CD4-positive, alpha-beta T cell (primary cell): ENCODE measurements at regions of chr7 and their contacts with region 1.

Region 1: GRCh38 chr7:129054438-129055293 is at the start of gene TNPO3:
- DNase-seq: peak; percentile 80 to 94 (median 86)
- ATAC-seq: peak; percentile 87
- H3K4me3 ChIP-seq: peak within 1 kb of the TSS; percentile 88
- H3K4me3 Mint-ChIP-seq: peak within 1 kb of the TSS; percentile 99
- H3K27ac ChIP-seq: peak within 1 kb of the TSS; percentile 91 to 98
- H3K27ac Mint-ChIP-seq: peak within 1 kb of the TSS; percentile 96
- H3K4me1 ChIP-seq: peaks cover 25% of the 10 kb centered on the region
- H3K4me1 Mint-ChIP-seq: peaks cover 49% of the 10 kb centered on the region
- H3K27me3 ChIP-seq: peaks cover 0 to 4% of the 10 kb centered on the region in 2 experiments
- H3K27me3 Mint-ChIP-seq: no peaks in the 10 kb centered on the region
- CTCF ChIP-seq: no peak
- total RNA-seq, gene TNPO3: 17.1 to 18.7 TPM

Region 2: DNA sequence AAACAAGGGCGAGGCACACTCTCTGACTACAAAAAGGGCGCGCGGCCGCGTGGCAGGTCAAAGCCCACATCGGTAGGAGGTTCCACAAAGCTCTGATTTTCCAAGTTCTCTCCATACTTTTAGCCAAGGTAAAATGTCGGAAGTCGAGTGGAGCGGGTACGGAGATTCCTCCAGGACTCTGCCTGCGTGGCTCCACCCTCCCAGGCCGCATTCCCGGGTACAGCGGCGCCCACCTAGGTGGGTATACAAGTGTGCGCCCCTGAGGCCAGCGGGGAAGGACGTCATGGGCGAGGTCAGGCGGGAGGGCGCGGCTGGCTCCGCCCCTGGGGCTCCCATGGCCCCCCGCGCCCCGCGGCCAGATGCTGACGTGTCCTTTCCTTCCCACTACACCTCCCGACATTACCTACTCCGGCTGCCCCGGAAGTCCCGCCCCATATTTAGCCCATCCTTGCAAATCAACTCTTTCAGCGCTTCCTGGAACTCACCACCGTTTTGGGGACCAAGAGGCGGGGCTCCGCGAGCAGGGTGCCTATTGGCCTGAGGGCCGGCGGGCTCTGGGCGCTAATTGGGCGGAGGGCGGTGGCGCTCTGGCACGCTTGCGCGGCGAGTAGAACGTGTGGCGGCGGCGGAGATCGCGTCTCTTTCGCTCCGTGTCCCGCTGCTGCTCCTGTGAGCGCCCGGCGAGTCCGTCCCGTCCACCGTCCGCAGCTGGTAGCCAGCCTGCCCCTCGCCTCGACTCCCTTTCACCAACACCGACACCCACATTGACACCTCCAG is 1402.9 kb before region 1 on chr7 and contains the start of gene SND1:
- CTCF ChIA-PET with region 1: no interaction called
- POLR2A ChIA-PET with region 1: no interaction called
- intact Hi-C with region 1: loop called in 1 of 2 experiments (anchors 10 kb)
- DNase-seq: peak; percentile 95 to 100 (median 98)
- ATAC-seq: peak; percentile 93
- H3K4me3 ChIP-seq: peak within 1 kb of the TSS; percentile 99
- H3K4me3 Mint-ChIP-seq: peak within 1 kb of the TSS; percentile 93
- H3K27ac ChIP-seq: peak within 1 kb of the TSS; percentile 89 to 94
- H3K27ac Mint-ChIP-seq: no peak within 1 kb of the TSS
- H3K4me1 ChIP-seq: peaks cover 43% of the 10 kb centered on the region
- H3K4me1 Mint-ChIP-seq: peaks cover 55% of the 10 kb centered on the region
- H3K27me3 ChIP-seq: no peaks in the 10 kb centered on the region
- H3K27me3 Mint-ChIP-seq: no peaks in the 10 kb centered on the region
- CTCF ChIP-seq: no peak
- total RNA-seq, gene SND1: 104 to 113 TPM

Region 3: DNA sequence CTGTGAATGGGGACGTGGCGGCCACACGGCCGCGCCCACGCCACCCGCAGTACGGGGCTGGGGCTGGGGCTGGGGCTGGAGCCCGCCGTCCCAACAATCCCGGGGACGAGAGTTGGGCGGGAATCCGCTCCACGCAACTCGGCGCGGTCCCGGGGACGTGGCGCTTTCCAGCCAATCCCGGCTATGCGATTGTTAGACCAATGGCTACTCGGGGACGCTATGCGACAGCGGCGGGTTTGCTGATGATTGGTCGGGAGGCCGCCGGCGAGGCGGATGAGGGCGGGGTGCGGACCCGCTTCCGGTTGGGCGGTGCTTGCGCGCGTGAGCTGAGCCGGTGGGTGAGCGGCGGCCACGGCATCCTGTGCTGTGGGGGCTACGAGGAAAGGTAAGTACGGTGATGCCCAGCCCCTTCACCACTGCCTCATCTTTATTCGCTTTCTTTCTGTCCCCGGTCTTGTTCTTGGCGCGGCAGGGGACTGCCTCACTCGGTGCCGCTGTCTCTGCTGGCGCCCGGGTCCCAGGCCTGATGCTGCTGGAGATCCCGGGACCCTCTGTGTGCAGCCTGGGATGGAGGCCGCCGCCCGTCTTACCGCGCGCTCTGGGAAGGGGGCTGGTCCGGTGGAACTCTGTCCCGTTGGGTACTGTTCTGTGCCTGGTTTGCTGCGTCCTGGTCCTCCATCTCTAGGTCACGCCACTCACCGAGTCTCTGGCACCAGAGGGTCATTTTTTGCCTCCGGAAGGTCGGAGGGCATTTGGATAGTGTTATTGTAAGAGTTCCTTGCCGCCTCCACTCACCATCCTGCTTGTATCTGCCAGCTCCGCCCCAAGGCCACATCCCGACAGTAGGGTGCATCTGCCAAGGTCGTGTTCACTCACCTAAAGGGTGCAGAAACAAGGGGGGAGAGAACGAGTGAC is 315.4 kb before region 1 on chr7 and contains the start of gene CALU:
- CTCF ChIA-PET with region 1: no interaction called
- POLR2A ChIA-PET with region 1: interaction called, 9 read pairs
- intact Hi-C with region 1: loop called in 1 of 2 experiments (anchors 5 kb)
- DNase-seq: peak; percentile 87 to 97 (median 91)
- ATAC-seq: peak; percentile 91
- H3K4me3 ChIP-seq: peak within 1 kb of the TSS; percentile 97
- H3K4me3 Mint-ChIP-seq: peak within 1 kb of the TSS; percentile 100
- H3K27ac ChIP-seq: peak within 1 kb of the TSS; percentile 80 to 93
- H3K27ac Mint-ChIP-seq: peak within 1 kb of the TSS; percentile 96
- H3K4me1 ChIP-seq: peaks cover 19% of the 10 kb centered on the region
- H3K4me1 Mint-ChIP-seq: peaks cover 46% of the 10 kb centered on the region
- H3K27me3 ChIP-seq: no peaks in the 10 kb centered on the region
- H3K27me3 Mint-ChIP-seq: no peaks in the 10 kb centered on the region
- CTCF ChIP-seq: no peak
- total RNA-seq, gene CALU: 28.4 to 29.9 TPM

Region 4: GRCh38 chr7:129091484-129092002 is 36.9 kb after region 1 on chr7:
- CTCF ChIA-PET with region 1: interaction called, 6 read pairs
- POLR2A ChIA-PET with region 1: interaction called, 3 read pairs
- intact Hi-C with region 1: loop called in 1 of 2 experiments (anchors 5 kb)
- DNase-seq: peak; percentile 72 to 92 (median 86)
- ATAC-seq: peak; percentile 80
- H3K4me3 ChIP-seq: no peak overlapping the region
- H3K4me3 Mint-ChIP-seq: no peak overlapping the region
- H3K27ac ChIP-seq: no peak overlapping the region
- H3K27ac Mint-ChIP-seq: no peak overlapping the region
- H3K4me1 ChIP-seq: peaks cover 20% of the 10 kb centered on the region
- H3K4me1 Mint-ChIP-seq: peaks cover 26% of the 10 kb centered on the region
- H3K27me3 ChIP-seq: no peaks in the 10 kb centered on the region
- H3K27me3 Mint-ChIP-seq: no peaks in the 10 kb centered on the region
- CTCF ChIP-seq: peak; percentile 97

Region 5: DNA sequence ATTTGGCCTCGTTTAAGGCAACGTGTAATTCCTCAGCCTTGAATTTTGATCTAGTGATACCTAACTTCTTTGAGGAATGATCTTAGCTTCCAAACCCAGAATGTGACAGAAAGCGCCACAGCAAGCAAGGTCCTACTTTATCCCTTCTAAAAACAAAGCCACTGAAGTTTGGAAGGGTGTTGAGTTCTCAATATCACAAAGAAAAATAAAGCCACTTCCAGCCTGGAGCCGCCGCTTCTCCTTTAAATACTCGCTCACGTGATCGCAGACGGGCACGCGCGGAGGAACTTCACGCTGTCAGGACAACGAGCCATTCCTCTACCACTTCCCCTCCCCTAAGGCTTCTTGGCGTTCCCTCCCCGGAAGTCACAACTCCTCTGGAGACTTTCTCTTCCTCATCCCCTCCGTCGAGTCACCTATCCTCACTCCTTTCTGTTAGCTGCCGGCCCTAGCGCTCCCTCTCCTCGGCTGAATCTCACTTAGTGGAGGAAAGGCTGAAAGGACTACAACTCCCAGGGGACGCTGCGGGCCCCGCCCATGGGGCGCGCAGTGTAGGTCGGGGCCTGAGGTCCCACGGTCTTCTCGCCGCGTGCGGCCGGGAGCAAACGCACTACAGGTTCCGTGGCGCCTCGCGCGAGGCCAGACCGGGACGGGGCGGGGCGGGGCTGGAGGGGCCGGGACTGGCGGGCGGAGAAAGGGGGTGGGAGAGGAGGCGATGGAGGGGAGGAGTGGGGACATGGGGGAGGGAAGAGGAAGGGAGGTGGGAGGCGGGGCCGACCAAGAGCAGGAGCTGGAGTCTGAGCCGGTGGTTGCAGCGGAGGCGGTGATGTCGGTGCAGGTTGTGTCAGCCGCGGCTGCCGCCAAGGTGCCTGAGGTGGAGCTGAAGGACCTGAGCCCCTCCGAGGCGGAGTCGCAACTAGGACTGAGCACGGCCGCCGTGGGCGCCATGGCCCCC is 169.9 kb after region 1 on chr7 and contains the start of gene AHCYL2:
- CTCF ChIA-PET with region 1: no interaction called
- POLR2A ChIA-PET with region 1: no interaction called
- intact Hi-C with region 1: loop called in 1 of 2 experiments (anchors 5 kb)
- DNase-seq: peak; percentile 96 to 99 (median 98)
- ATAC-seq: peak; percentile 89
- H3K4me3 ChIP-seq: peak within 1 kb of the TSS; percentile 91
- H3K4me3 Mint-ChIP-seq: peak within 1 kb of the TSS; percentile 96
- H3K27ac ChIP-seq: peak within 1 kb of the TSS; percentile 72 to 97
- H3K27ac Mint-ChIP-seq: peak within 1 kb of the TSS; percentile 89
- H3K4me1 ChIP-seq: peaks cover 25% of the 10 kb centered on the region
- H3K4me1 Mint-ChIP-seq: peaks cover 56% of the 10 kb centered on the region
- H3K27me3 ChIP-seq: no peaks in the 10 kb centered on the region
- H3K27me3 Mint-ChIP-seq: no peaks in the 10 kb centered on the region
- CTCF ChIP-seq: no peak
- total RNA-seq, gene AHCYL2: 5.8 to 6.0 TPM

Region 6: GRCh38 chr7:130050773-130051125 is 996.1 kb after region 1 on chr7:
- CTCF ChIA-PET with region 1: no interaction called
- POLR2A ChIA-PET with region 1: no interaction called
- intact Hi-C with region 1: loop called in 1 of 2 experiments (anchors 10 kb)
- DNase-seq: no peak
- ATAC-seq: no peak
- H3K4me3 ChIP-seq: peak overlapping the region; percentile 85
- H3K4me3 Mint-ChIP-seq: peak overlapping the region; percentile 98
- H3K27ac ChIP-seq: peak overlapping the region; percentile 29 to 45
- H3K27ac Mint-ChIP-seq: peak overlapping the region; percentile 81
- H3K4me1 ChIP-seq: peaks cover 15% of the 10 kb centered on the region
- H3K4me1 Mint-ChIP-seq: peaks cover 10% of the 10 kb centered on the region
- H3K27me3 ChIP-seq: no peaks in the 10 kb centered on the region
- H3K27me3 Mint-ChIP-seq: no peaks in the 10 kb centered on the region
- CTCF ChIP-seq: no peak